HCT116 (cell line): ENCODE measurements at regions of chr2 and their contacts with region 1.

Region 1: GRCh38 chr2:219073413-219074129 is 12.8 kb upstream of the IHH start:
- DNase-seq: peak; percentile 55
- ATAC-seq: peak; percentile 90
- H3K4me3 ChIP-seq: no peak overlapping the region
- H3K27ac ChIP-seq: no peak overlapping the region
- H3K4me1 ChIP-seq: peaks cover 0 to 9% of the 10 kb centered on the region in 2 experiments; a peak in 1 of 4 replicates
- H3K27me3 ChIP-seq: no peaks in the 10 kb centered on the region
- CTCF ChIP-seq: peak; percentile 75 to 83 (median 80)
- POLR2A ChIP-seq: no peak
- RAD21 ChIP-seq: peak; percentile 79

Region 2: GRCh38 chr2:218482651-218483050 is 590.9 kb before region 1 on chr2:
- CTCF ChIA-PET with region 1: no interaction called
- POLR2A ChIA-PET with region 1: no interaction called
- RAD21 ChIA-PET with region 1: no interaction called
- intact Hi-C with region 1: no loop called
- DNase-seq: no peak
- ATAC-seq: no peak
- H3K4me3 ChIP-seq: no peak overlapping the region
- H3K27ac ChIP-seq: no peak overlapping the region
- H3K4me1 ChIP-seq: no peaks in the 10 kb centered on the region
- H3K27me3 ChIP-seq: no peaks in the 10 kb centered on the region
- CTCF ChIP-seq: no peak
- POLR2A ChIP-seq: no peak
- RAD21 ChIP-seq: no peak

Region 3: DNA sequence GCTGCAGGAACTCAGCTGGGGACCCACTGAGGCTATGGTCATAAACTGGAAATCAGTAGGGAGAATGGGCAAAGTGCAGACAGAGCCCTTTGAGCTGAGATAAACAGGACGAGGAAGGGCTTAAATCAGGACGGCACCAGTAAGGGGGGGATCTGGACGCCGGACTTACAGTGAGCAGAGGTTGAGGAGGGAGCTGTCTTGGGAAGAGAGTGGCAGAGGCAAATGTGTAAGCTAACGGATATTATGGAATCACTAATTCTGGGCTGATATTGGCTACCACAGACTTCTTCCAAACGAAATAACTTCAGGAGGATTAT is 291.1 kb before region 1 on chr2:
- CTCF ChIA-PET with region 1: no interaction called
- POLR2A ChIA-PET with region 1: no interaction called
- RAD21 ChIA-PET with region 1: no interaction called
- intact Hi-C with region 1: no loop called
- DNase-seq: no peak
- ATAC-seq: no peak
- H3K4me3 ChIP-seq: no peak overlapping the region
- H3K27ac ChIP-seq: no peak overlapping the region
- H3K4me1 ChIP-seq: peaks cover 0 to under 1% of the 10 kb centered on the region in 2 experiments; a peak in 1 of 4 replicates
- H3K27me3 ChIP-seq: no peaks in the 10 kb centered on the region
- CTCF ChIP-seq: no peak
- POLR2A ChIP-seq: no peak
- RAD21 ChIP-seq: no peak

Region 4: DNA sequence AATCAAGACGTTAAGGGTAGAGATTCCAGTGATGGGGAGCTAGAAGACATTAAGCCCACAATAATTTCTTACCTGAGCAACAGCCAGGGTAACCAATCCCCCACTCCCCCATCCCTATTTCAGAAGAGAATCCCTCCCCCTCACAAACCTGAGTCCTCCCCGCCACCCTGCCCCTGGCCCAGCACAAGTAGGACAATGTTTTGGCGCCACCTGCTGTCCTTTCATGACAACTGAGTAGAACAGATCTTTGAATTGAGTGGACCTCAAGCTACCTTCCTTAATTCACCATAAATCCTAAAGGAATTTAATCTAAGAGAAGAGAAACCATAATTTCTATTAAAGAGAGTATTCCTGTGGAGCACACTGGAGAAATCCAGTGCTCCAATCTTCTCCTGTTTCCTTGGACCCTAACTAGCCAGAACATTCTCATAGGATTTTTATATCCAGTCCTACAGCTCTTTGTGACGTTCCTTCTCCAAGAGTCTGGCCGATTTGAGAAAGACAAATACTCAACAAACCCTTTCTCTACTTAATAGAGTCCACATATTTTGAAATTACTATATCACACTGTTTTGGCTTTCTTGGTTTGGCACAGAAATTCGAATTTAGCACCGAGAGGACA is 46.0 kb after region 1 on chr2:
- CTCF ChIA-PET with region 1: interaction called, 51 read pairs
- POLR2A ChIA-PET with region 1: no interaction called
- RAD21 ChIA-PET with region 1: interaction called, 4 to 5 read pairs
- intact Hi-C with region 1: loop called (anchors 1 kb)
- DNase-seq: peak; percentile 27
- ATAC-seq: peak; percentile 93
- H3K4me3 ChIP-seq: no peak overlapping the region
- H3K27ac ChIP-seq: no peak overlapping the region
- H3K4me1 ChIP-seq: peaks cover 7 to 8% of the 10 kb centered on the region in 2 experiments
- H3K27me3 ChIP-seq: no peaks in the 10 kb centered on the region; the same call in 1 of the 2 replicates
- CTCF ChIP-seq: peak; percentile 67 to 93 (median 90)
- POLR2A ChIP-seq: no peak
- RAD21 ChIP-seq: peak; percentile 91

Region 5: GRCh38 chr2:219142329-219142728 is 68.8 kb after region 1 on chr2:
- CTCF ChIA-PET with region 1: interaction called, 3 read pairs
- POLR2A ChIA-PET with region 1: no interaction called
- RAD21 ChIA-PET with region 1: no interaction called
- intact Hi-C with region 1: loop called (anchors 5 kb)
- DNase-seq: peak; percentile 31
- ATAC-seq: peak; percentile 99
- H3K4me3 ChIP-seq: no peak overlapping the region
- H3K27ac ChIP-seq: no peak overlapping the region
- H3K4me1 ChIP-seq: peaks cover 16 to 21% of the 10 kb centered on the region in 2 experiments
- H3K27me3 ChIP-seq: no peaks in the 10 kb centered on the region
- CTCF ChIP-seq: no peak
- POLR2A ChIP-seq: no peak
- RAD21 ChIP-seq: no peak

Region 6: DNA sequence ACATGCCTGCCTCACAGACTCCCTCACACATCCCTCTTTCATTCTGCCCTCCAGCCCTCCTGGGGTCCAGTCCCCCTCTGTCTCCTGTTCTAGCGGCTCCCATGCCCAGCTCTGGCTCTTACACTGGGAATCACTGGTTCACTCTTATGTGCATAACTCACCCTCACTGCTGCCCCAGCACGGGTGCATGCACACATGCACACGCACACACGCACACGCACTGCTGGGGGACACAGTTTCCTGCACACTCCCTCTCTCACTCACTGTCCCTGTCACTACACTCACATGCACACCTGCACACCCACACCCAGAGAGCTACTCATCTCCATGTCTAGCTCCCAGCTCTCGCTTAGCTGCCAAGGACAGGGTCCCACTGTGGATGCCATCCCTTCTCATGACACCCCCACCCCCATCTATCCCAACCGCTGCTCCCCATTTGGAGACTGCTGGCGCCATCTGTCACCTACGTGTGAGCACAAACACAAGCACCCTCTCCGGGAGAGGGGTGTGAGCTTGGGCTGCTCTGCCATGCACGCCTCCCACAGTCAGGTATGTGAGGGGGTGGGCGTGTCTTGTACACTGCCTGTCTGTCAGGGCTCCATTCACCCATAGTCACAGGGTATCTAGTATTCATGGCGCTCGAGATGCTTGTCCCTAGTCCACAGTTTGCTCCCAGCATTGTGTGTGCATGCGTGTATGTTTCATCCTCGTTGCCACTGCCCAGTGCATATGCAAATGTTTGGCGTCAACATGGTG is 442.5 kb after region 1 on chr2:
- CTCF ChIA-PET with region 1: no interaction called
- POLR2A ChIA-PET with region 1: no interaction called
- RAD21 ChIA-PET with region 1: no interaction called
- intact Hi-C with region 1: no loop called
- DNase-seq: no peak
- ATAC-seq: no peak
- H3K4me3 ChIP-seq: no peak overlapping the region
- H3K27ac ChIP-seq: no peak overlapping the region
- H3K4me1 ChIP-seq: peaks cover 13 to 33% of the 10 kb centered on the region in 2 experiments
- H3K27me3 ChIP-seq: no peaks in the 10 kb centered on the region
- CTCF ChIP-seq: no peak
- POLR2A ChIP-seq: no peak
- RAD21 ChIP-seq: no peak